ENCODE measurements at regions of chr13 and their contacts with region 1.

Region 1: GRCh38 chr13:77506874-77507273 is 28.6 kb upstream of the SCEL start:
- DNase-seq: no peak
- ATAC-seq: no peak
- H3K4me3 ChIP-seq: no peak overlapping the region
- H3K27ac ChIP-seq: no peak overlapping the region
- H3K4me1 ChIP-seq: peaks cover 0 to 3% (median 0%) of the 10 kb centered on the region in 12 donors
- H3K27me3 ChIP-seq: peaks cover 0 to 4% (median 0%) of the 10 kb centered on the region in 9 donors
- CTCF ChIP-seq: peak in 9 of 12 donors; percentile 7 to 39 (median 20)
- POLR2A ChIP-seq: no peak

Region 2: DNA sequence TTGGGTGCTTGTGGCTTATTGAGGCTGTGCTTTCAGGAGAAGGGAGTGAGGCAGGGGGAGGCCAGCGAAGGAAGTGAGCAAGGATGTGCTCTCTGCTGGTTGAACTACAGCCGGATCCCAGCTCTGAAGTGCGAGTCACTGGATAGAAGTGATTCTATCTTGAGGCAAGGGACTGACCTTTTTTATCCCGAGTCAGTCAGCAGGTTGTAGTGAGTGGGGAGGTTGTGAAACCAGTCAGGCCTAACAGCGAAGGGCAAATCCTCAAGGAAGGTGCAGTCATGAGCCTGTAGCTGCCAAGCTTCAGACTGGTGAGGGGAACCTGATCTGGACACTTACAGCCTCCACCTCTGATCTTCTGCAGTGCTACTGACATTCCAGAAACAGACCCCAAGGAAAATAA is 47.2 kb after region 1 on chr13:
- intact Hi-C with region 1: loop called in 1 of 10 experiments (anchors 10 kb)
- DNase-seq: no peak
- ATAC-seq: no peak
- H3K4me3 ChIP-seq: no peak overlapping the region
- H3K27ac ChIP-seq: no peak overlapping the region
- H3K4me1 ChIP-seq: no peaks in the 10 kb centered on the region
- H3K27me3 ChIP-seq: no peaks in the 10 kb centered on the region
- CTCF ChIP-seq: no peak
- POLR2A ChIP-seq: no peak